Common myeloid progenitor, CD34-positive (primary cell): ENCODE measurements at regions of chr19 and their contacts with region 1.

Region 1: GRCh38 chr19:50537762-50538230 is 24.1 kb upstream of the ASPDH start:
- DNase-seq: peak; percentile 73 to 78 (median 78)
- H3K4me3 ChIP-seq: no peak overlapping the region
- H3K27ac ChIP-seq: no peak overlapping the region
- H3K4me1 ChIP-seq: no peaks in the 10 kb centered on the region
- H3K27me3 ChIP-seq: peaks cover 0 to 3% (median 0%) of the 10 kb centered on the region in 5 experiments

Region 2: GRCh38 chr19:50431343-50432220 is 106.2 kb before region 1 on chr19:
- CTCF ChIA-PET with region 1: no interaction called
- POLR2A ChIA-PET with region 1: no interaction called
- DNase-seq: peak; percentile 87 to 92 (median 91)
- H3K4me3 ChIP-seq: peak overlapping the region; percentile 42 to 86 (median 68)
- H3K27ac ChIP-seq: peak overlapping the region; percentile 40 to 75
- H3K4me1 ChIP-seq: peaks cover 0 to 36% (median 33%) of the 10 kb centered on the region in 4 experiments
- H3K27me3 ChIP-seq: peaks cover 0 to 1% (median 0%) of the 10 kb centered on the region in 5 experiments

Region 3: GRCh38 chr19:50556282-50557008 is 18.6 kb after region 1 on chr19:
- CTCF ChIA-PET with region 1: interaction called, 33 read pairs
- POLR2A ChIA-PET with region 1: no interaction called
- DNase-seq: peak; percentile 70 to 85 (median 83)
- H3K4me3 ChIP-seq: peak overlapping the region in 6 of 7 experiments; percentile 37 to 81 (median 63)
- H3K27ac ChIP-seq: no peak overlapping the region
- H3K4me1 ChIP-seq: peaks cover 0 to 14% (median 9%) of the 10 kb centered on the region in 4 experiments
- H3K27me3 ChIP-seq: peaks cover 0 to 72% (median 22%) of the 10 kb centered on the region in 5 experiments

Region 4: DNA sequence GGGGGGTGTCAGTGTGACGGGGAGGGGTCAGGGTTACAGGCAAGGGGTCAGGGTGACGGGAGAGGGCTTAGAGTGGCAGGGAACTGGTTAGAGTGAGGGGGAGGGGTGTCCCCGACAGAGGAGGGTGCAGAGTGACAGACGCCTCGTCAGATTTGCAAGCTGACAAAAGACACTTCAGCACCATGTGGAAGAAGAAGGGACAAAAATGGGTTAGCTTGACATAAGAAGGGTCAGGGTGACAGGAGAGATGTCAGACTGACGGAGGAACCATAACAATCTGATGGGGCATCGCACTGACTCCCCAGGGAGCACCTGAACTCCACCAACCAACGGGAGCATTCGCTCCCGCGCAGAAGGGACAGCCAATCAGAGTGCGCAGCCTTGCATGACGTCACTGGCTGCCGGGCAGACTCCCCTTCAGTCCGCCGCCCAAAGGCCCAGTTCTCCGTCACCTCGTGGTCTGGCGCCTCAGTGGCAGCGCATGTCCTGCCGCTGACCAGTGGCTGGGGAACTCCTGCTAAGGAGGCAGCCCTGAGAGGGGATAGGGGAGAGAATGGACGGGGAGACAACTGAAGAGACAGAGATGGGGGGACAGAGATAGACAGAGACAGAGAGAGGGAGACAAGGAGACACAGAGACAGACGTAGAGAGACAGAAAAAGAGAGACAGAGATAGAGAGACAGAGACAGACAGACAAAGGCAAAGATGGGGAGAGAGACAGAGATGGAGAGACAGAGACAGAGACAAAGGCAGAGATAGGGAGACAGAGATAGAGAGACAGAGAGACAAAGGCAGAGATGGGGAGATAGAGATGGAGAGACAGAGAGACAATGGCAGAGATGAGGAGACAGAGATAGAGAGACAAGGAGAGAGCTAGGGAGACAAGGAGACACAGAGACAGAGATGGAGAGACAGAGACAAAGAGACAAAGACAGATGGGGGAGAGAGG is 141.7 kb after region 1 on chr19:
- CTCF ChIA-PET with region 1: no interaction called
- POLR2A ChIA-PET with region 1: no interaction called
- DNase-seq: peak; percentile 71 to 84 (median 76)
- H3K4me3 ChIP-seq: no peak overlapping the region
- H3K27ac ChIP-seq: no peak overlapping the region
- H3K4me1 ChIP-seq: peaks cover 0 to 4% (median 0%) of the 10 kb centered on the region in 4 experiments
- H3K27me3 ChIP-seq: peaks cover 0 to 66% (median 10%) of the 10 kb centered on the region in 5 experiments

Region 5: DNA sequence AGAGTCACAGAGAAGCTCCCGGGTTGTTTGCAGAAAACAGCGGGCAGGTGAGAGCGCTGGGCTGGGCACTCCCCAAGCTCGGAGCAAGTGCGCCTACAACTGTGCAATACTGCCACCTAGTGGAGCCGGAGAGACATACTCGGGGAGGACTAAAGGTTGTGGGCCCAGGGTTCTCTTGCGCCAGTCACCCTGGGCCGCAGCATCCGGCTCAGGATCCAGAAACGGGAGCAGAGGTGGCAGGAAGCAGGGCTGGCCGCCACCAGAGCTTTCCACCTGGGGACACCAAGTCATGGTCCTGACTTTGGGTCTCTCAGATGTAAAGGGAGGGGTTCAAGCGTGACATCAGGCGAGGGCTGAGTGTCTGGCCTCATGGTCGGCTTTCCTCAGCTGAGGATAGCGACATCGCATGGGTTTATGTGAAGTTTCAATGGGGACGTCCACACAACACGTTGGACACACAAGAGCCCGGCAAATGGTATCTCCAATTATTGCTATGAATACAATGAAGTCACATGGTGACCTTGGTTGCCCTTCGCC is 384.6 kb after region 1 on chr19:
- CTCF ChIA-PET with region 1: interaction called, 12 read pairs
- POLR2A ChIA-PET with region 1: no interaction called
- DNase-seq: peak; percentile 72 to 87 (median 83)
- H3K4me3 ChIP-seq: no peak overlapping the region
- H3K27ac ChIP-seq: no peak overlapping the region
- H3K4me1 ChIP-seq: peaks cover 0 to 8% (median 6%) of the 10 kb centered on the region in 4 experiments
- H3K27me3 ChIP-seq: peaks cover 0 to 31% (median 2%) of the 10 kb centered on the region in 5 experiments